ENCODE measurements at regions of chr3 and their contacts with region 1.

Region 1: GRCh38 chr3:122409446-122409845 is 6.4 kb downstream of the WDR5B start:
- DNase-seq: no peak
- ATAC-seq: no peak
- H3K4me3 Mint-ChIP-seq: no peak overlapping the region
- H3K27ac Mint-ChIP-seq: peak overlapping the region; percentile 3
- H3K4me1 Mint-ChIP-seq: peaks cover 41% of the 10 kb centered on the region
- H3K27me3 Mint-ChIP-seq: no peaks in the 10 kb centered on the region

Region 2: GRCh38 chr3:122392868-122393844 is 16.3 kb before region 1 on chr3:
- CTCF ChIA-PET with region 1: interaction called, 13 read pairs
- POLR2A ChIA-PET with region 1: no interaction called
- intact Hi-C with region 1: no loop called
- DNase-seq: no peak
- ATAC-seq: peak; percentile 55
- H3K4me3 Mint-ChIP-seq: no peak overlapping the region
- H3K27ac Mint-ChIP-seq: no peak overlapping the region
- H3K4me1 Mint-ChIP-seq: peaks cover 33% of the 10 kb centered on the region
- H3K27me3 Mint-ChIP-seq: no peaks in the 10 kb centered on the region

Region 3: GRCh38 chr3:122824465-122825381 is 415.3 kb after region 1 on chr3:
- CTCF ChIA-PET with region 1: no interaction called
- POLR2A ChIA-PET with region 1: no interaction called
- intact Hi-C with region 1: no loop called
- DNase-seq: no peak
- ATAC-seq: no peak
- H3K4me3 Mint-ChIP-seq: no peak overlapping the region
- H3K27ac Mint-ChIP-seq: no peak overlapping the region
- H3K4me1 Mint-ChIP-seq: no peaks in the 10 kb centered on the region
- H3K27me3 Mint-ChIP-seq: no peaks in the 10 kb centered on the region